ENCODE measurements at regions of chr16 and their contacts with region 1.

Region 1: DNA sequence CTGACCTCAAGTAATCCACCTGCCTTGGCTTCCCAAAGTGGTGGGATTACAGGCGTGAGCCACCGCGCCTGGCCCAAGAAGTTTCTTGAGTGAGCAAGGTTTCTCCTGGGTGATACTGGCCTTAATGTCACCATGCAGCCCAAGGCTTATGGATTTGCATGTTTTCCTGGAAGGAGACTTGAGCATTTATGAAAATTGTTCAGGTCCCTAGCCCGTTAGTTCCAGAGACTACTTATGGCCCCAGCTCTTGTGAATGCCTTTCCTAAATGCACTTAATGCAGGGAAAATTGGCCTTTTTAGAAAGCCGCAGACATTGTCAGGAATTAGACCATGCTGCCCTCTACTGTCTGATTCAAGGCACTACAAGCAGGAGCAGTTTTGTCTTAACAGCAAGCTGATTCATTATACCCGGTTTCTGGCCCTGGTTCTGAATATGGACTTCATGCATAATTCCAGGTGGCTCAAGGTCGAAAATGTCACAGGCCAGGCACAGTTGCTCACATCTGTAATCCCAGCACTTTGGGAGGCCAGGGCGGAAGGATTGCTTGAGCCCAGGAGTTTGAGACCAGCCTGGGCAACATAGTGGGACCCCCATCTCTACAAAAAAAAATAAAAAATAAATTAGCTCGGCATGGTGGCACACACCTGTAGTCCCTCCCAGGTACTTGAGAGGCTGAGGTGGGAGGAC is 91.3 kb downstream of the SNX29 start:
- DNase-seq: no peak
- ATAC-seq: peak; percentile 67

Region 2: GRCh38 chr16:11407047-11407982 is 660.5 kb before region 1 on chr16:
- intact Hi-C with region 1: loop called (anchors 10 kb)
- DNase-seq: no peak
- ATAC-seq: peak; percentile 45

Region 3: GRCh38 chr16:11851294-11852091 is 216.4 kb before region 1 on chr16 and contains the start of gene RSL1D1:
- intact Hi-C with region 1: loop called (anchors 5 kb)
- DNase-seq: peak; percentile 92
- ATAC-seq: peak; percentile 98
- total RNA-seq, gene RSL1D1: 111 TPM

Region 4: GRCh38 chr16:11949527-11949926 is 118.3 kb before region 1 on chr16:
- intact Hi-C with region 1: loop called (anchors 2 kb)
- DNase-seq: no peak
- ATAC-seq: peak; percentile 64

Region 5: GRCh38 chr16:11977376-11978041 is 90.3 kb before region 1 on chr16:
- intact Hi-C with region 1: loop called (anchors 2 kb)
- DNase-seq: no peak
- ATAC-seq: peak; percentile 66

Region 6: GRCh38 chr16:12087901-12088421 is 20.1 kb after region 1 on chr16:
- intact Hi-C with region 1: no loop called
- DNase-seq: no peak
- ATAC-seq: peak; percentile 71